ENCODE measurements at regions of chr2 and their contacts with region 1.

Region 1: GRCh38 chr2:218381916-218382366 is at the start of gene SLC11A1:
- DNase-seq: peak in 1 of 35 experiments; percentile 46
- ATAC-seq: no peak
- H3K4me3 ChIP-seq: no peak within 1 kb of the TSS
- H3K4me3 Mint-ChIP-seq: no peak within 1 kb of the TSS
- H3K27ac ChIP-seq: no peak within 1 kb of the TSS
- H3K27ac Mint-ChIP-seq: no peak within 1 kb of the TSS
- H3K4me1 ChIP-seq: peaks cover 0 to 6% of the 10 kb centered on the region in 2 experiments
- H3K4me1 Mint-ChIP-seq: peaks cover 0 to 6% (median 1%) of the 10 kb centered on the region in 3 donors
- H3K27me3 ChIP-seq: peaks cover 0 to 12% of the 10 kb centered on the region in 2 experiments
- H3K27me3 Mint-ChIP-seq: peaks cover 0 to 3% of the 10 kb centered on the region in 2 donors
- total RNA-seq, gene SLC11A1: 0.40 to 1.2 (median 0.79) TPM

Region 2: DNA sequence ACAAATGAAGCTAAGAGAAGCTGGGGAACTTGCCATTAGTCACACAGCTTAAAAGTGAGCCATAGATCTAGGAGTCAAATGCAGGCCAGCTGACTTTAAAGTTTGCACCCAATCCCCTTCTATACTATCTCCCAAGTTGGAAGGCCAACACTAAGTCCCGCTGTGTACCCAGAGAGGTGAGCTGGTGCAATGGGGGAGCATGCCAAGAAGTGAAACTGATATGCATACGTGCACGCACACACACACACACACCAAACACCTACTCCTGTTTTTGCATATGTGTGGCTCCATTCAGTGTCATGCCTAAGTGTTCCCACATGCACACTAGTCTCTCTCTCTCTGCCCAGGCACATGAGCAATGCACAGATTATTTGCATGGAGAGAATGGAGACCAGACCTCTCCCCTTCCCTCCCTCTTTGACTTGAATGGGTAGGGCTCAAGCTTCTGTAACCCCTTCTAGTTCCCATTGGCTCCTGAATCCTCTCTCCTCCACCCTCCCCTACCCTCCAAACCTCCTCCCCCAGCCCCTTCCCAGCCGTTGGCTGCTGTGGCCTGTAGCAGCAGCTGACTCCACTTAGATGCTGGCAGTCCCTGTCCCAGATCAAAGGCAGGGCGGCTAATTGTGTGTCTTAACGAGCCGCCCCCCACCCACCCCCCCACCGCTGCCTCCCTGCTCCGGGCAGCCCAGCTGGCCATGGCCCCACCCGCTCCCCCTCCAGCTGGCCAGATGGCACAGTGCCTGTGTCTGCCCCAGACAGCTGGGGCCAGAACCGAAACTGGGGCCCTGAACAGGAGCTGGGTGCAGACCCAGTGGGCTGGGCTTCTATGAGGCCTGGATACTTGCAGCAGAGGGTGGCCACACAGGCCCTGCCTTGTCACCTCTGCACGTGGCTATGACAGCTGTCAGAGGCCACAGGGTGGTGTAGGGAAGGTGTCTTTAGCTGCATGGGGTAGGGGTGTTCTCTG is 504.3 kb after region 1 on chr2:
- CTCF ChIA-PET with region 1: interaction called in 1 of 2 experiments, 13 read pairs
- POLR2A ChIA-PET with region 1: no interaction called
- DNase-seq: no peak
- ATAC-seq: no peak
- H3K4me3 ChIP-seq: no peak overlapping the region
- H3K4me3 Mint-ChIP-seq: no peak overlapping the region
- H3K27ac ChIP-seq: no peak overlapping the region
- H3K27ac Mint-ChIP-seq: peak overlapping the region; percentile 25 to 49
- H3K4me1 ChIP-seq: peaks cover 2 to 29% of the 10 kb centered on the region in 2 experiments
- H3K4me1 Mint-ChIP-seq: peaks cover 32 to 54% (median 47%) of the 10 kb centered on the region in 3 donors
- H3K27me3 ChIP-seq: peaks cover 3 to 21% of the 10 kb centered on the region in 2 experiments
- H3K27me3 Mint-ChIP-seq: no peaks in the 10 kb centered on the region

Measured in T-cell (primary cell).